Activated CD8-positive, alpha-beta T cell treated with anti-CD3 and anti-CD28 coated beads for 36 hours (primary cell): ENCODE measurements at regions of chr18 and their contacts with region 1.

Region 1: GRCh38 chr18:22563098-22563707 is 145.5 kb upstream of the CTAGE1 start:
- DNase-seq: peak; percentile 21
- ATAC-seq: peak; percentile 80
- H3K4me3 Mint-ChIP-seq: no peak overlapping the region
- H3K27ac Mint-ChIP-seq: no peak overlapping the region
- H3K4me1 Mint-ChIP-seq: peaks cover 11% of the 10 kb centered on the region
- H3K27me3 Mint-ChIP-seq: peaks cover 37% of the 10 kb centered on the region
- CTCF ChIP-seq: peak; percentile 60

Region 2: DNA sequence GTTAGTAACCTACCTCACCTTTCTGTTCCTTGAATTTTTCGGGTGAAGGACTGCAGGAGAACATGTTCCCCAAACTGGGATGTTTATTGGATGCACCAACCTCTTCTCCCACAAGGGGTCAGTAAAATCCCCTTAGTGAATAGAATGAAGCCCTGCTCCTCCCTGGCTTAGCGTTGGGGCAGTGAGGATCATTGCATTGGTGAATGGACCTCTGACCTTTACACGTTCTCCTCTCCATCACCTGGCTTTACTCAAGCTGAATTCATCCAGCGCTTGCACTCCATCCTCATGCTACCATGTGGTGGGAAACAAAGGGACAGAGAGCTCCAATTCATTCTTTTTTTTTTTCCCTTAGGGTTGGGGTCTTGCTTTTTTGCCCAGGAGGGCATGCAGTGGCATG is 665.4 kb before region 1 on chr18:
- CTCF ChIA-PET with region 1: no interaction called
- POLR2A ChIA-PET with region 1: no interaction called
- intact Hi-C with region 1: loop called (anchors 5 kb)
- DNase-seq: peak; percentile 43
- ATAC-seq: peak; percentile 69
- H3K4me3 Mint-ChIP-seq: no peak overlapping the region
- H3K27ac Mint-ChIP-seq: no peak overlapping the region
- H3K4me1 Mint-ChIP-seq: peaks cover 3% of the 10 kb centered on the region
- H3K27me3 Mint-ChIP-seq: peaks cover 9% of the 10 kb centered on the region
- CTCF ChIP-seq: peak; percentile 69

Region 3: GRCh38 chr18:22169007-22169864 is 394.0 kb before region 1 on chr18 and contains the start of gene GATA6:
- CTCF ChIA-PET with region 1: interaction called, 3 read pairs
- POLR2A ChIA-PET with region 1: no interaction called
- intact Hi-C with region 1: loop called (anchors 5 kb)
- DNase-seq: peak; percentile 71
- ATAC-seq: peak; percentile 76
- H3K4me3 Mint-ChIP-seq: peak within 1 kb of the TSS; percentile 78
- H3K27ac Mint-ChIP-seq: no peak within 1 kb of the TSS
- H3K4me1 Mint-ChIP-seq: peaks cover 23% of the 10 kb centered on the region
- H3K27me3 Mint-ChIP-seq: peaks cover 74% of the 10 kb centered on the region
- CTCF ChIP-seq: peak; percentile 26
- total RNA-seq, gene GATA6: not detected

Region 4: GRCh38 chr18:22250591-22250996 is 312.6 kb before region 1 on chr18:
- CTCF ChIA-PET with region 1: no interaction called
- POLR2A ChIA-PET with region 1: no interaction called
- intact Hi-C with region 1: no loop called
- DNase-seq: no peak
- ATAC-seq: no peak
- H3K4me3 Mint-ChIP-seq: no peak overlapping the region
- H3K27ac Mint-ChIP-seq: no peak overlapping the region
- H3K4me1 Mint-ChIP-seq: peaks cover 6% of the 10 kb centered on the region
- H3K27me3 Mint-ChIP-seq: no peaks in the 10 kb centered on the region
- CTCF ChIP-seq: no peak

Region 5: DNA sequence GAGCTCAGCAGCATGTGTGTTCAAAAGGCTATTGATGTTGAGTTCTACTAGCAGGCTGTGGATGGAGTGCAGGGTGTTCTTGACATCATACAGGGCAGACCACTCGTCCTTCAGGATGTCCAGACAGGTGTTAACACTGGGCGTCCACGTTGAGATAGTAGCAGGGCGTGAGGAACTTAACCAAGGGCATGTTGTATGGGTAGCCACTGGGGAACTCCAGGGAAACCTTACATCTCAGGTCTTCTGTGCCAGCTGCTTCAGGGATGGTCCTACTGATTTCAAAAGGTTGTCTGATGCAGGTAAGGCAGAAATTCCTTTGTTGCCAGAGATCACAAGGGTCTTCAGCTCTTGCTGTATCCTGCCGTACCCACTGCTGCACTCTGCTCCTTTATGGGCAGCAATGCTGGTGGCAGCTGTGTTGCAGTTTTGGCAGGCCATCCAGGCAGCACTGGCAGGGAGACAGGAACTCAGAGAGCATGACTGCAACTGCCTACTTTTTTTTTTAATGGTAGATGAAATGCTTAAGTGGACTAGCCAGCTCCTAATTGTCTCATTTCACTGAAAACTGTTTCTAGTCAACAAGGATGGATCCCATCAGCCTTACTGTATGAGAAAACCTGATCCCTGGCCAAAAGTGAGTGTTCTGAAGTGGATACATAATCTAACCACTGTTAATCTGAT is 337.5 kb after region 1 on chr18:
- CTCF ChIA-PET with region 1: no interaction called
- POLR2A ChIA-PET with region 1: no interaction called
- intact Hi-C with region 1: no loop called
- DNase-seq: no peak
- ATAC-seq: no peak
- H3K4me3 Mint-ChIP-seq: no peak overlapping the region
- H3K27ac Mint-ChIP-seq: no peak overlapping the region
- H3K4me1 Mint-ChIP-seq: no peaks in the 10 kb centered on the region
- H3K27me3 Mint-ChIP-seq: no peaks in the 10 kb centered on the region
- CTCF ChIP-seq: no peak